Activated CD4-positive, alpha-beta T cell treated with anti-CD3 and anti-CD28 coated beads, Interleukin-2, amount 10 ng/mL, durations not matched to agents 7 days and 5 days (primary cell): ENCODE measurements at regions of chr19 and their contacts with region 1.

Region 1: DNA sequence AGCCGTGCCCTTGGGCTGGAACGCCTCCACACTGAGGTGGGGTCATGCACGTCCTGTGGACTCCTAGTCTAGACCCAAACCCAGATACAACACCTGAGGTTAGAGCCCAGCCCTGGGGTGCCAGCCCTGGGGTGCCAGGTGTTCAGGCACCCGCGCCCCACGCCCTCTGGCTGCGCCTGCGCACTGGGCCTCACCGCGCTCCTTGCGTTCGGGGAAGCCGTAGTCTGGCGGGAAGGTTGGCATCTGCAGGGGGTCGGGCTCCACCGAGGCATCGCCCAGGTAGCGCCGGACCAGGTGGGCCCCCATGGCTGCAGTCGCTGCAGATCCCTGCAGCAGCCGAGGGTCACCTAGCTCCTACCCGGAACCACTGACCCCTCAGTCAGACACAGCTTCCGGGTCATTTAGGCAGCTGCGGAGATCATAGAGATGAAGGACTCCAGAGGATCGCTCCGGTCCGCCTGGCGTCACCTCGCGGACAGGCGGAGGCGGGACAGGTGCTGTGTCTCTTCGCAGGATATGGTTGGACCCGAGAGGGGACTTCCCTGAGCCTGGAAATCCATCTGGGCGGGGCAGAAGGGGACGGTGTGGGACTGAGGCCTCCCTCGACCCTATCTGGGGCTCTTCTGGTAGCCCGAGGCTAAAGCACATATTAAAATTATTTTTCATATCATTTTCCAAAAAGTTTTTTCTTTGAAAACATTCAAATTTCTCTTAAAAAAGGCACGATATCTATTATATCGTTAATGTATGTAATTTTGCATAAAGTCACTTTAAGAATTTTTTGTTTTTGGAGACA is at the start of gene NDUFB7:
- DNase-seq: peak; percentile 92
- H3K4me3 Mint-ChIP-seq: peak within 1 kb of the TSS; percentile 94
- H3K27ac Mint-ChIP-seq: peak within 1 kb of the TSS; percentile 92
- H3K4me1 Mint-ChIP-seq: peaks cover 41% of the 10 kb centered on the region
- H3K27me3 Mint-ChIP-seq: no peaks in the 10 kb centered on the region
- total RNA-seq, gene NDUFB7: 121 to 123 TPM

Region 2: DNA sequence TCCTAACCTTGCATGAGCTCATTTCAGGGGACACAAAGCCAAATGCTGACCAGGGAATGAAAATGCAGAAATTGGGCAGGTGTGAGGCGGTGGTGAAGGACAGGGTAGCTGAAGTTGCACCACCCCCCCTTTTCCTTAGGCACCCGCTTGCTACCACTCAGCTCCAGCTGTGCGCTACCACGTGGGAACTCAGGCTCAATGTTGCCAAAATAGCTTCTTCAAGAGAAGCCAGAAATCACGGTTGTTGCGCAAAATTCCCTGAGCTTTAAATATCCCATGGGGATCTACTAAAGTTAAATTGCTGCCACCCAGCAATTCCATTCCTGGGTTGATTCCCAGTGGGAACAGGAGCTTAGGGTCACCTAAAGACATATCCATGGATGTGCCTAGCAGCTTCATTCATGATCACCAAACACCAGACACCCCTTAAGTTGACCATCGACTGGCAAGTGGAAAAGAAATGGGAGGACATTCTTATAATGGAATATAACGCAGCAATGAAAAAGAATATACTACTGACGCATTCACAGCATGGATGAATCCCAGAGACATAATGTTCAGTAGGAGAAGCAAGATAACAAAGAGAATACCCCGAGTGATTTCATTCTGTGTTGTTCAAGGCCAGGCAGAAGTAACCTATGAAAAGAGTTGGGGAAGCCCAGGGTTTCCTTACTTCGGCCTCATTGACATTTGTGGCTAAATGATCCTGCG is 353.1 kb before region 1 on chr19:
- CTCF ChIA-PET with region 1: no interaction called
- POLR2A ChIA-PET with region 1: no interaction called
- DNase-seq: no peak
- H3K4me3 Mint-ChIP-seq: no peak overlapping the region
- H3K27ac Mint-ChIP-seq: no peak overlapping the region
- H3K4me1 Mint-ChIP-seq: peaks cover 23% of the 10 kb centered on the region
- H3K27me3 Mint-ChIP-seq: peaks cover 3% of the 10 kb centered on the region

Region 3: GRCh38 chr19:14556662-14557188 is 15.2 kb before region 1 on chr19:
- CTCF ChIA-PET with region 1: interaction called, 30 read pairs
- POLR2A ChIA-PET with region 1: interaction called, 3 read pairs
- DNase-seq: peak; percentile 69
- H3K4me3 Mint-ChIP-seq: no peak overlapping the region
- H3K27ac Mint-ChIP-seq: no peak overlapping the region
- H3K4me1 Mint-ChIP-seq: peaks cover 29% of the 10 kb centered on the region
- H3K27me3 Mint-ChIP-seq: no peaks in the 10 kb centered on the region

Region 4: DNA sequence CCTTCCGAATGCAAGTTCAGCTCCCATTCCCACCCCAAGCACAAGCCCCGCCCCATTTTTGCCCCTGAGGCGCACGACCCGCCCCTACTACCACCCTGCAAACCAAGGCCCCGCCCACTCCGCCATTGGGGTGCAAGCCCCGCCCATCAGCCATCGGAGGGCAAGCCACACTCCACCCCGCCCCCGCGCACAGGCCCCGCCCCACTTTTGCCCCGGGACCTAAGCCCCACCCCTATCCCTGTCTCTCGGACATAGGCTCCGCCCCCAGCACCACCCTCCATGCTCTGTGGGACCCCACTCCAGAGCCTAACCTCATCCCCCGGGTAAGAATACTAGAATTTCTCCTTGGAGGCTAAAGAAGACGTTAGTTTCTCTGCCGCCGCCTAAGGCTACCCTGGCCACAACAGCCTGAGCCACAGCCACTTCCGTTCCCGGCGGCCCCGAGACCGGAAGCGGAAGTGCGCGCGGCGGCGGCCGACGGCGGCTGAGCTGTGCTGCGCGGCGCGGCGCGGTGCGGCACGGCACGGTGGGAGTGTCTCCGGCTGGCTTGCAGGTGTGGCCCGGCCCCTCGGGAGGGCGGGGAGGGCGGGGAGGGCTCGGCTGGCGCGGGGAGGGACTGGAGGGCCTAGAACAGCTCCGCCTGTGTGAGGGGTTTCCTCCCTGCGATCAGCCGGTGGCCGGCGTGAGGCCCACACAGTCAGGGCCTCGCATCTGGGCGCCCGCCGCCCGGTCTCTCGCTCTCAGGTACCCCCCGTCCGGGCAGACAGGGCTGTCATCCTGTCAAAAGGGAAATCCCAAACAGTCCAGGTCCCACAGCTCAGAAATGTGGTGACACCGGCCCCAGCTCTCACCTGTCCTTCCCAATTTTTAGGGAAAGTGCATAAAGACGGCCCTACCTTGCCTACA is 118.0 kb after region 1 on chr19 and contains the start of gene ZNF333:
- CTCF ChIA-PET with region 1: interaction called, 100 read pairs
- POLR2A ChIA-PET with region 1: interaction called, 3 read pairs
- DNase-seq: peak; percentile 99
- H3K4me3 Mint-ChIP-seq: peak within 1 kb of the TSS; percentile 94
- H3K27ac Mint-ChIP-seq: peak within 1 kb of the TSS; percentile 100
- H3K4me1 Mint-ChIP-seq: peaks cover 21% of the 10 kb centered on the region
- H3K27me3 Mint-ChIP-seq: no peaks in the 10 kb centered on the region
- total RNA-seq, gene ZNF333: 12.5 to 14.9 TPM